Heart left ventricle (tissue), 16 donors: ENCODE measurements at regions of chrX and their contacts with region 1.

Region 1: GRCh38 chrX:49073601-49074571 is at the start of gene PRAF2:
- DNase-seq: peak; percentile 92 to 95 (median 94)
- ATAC-seq: peak; percentile 90 to 96 (median 92)
- H3K4me3 ChIP-seq: peak within 1 kb of the TSS; percentile 14 to 90 (median 63)
- H3K27ac ChIP-seq: peak within 1 kb of the TSS in 11 of 12 donors; percentile 69 to 92 (median 79)
- H3K4me1 ChIP-seq: peaks cover 0 to 20% (median 6%) of the 10 kb centered on the region in 12 donors
- H3K27me3 ChIP-seq: no peaks in the 10 kb centered on the region
- CTCF ChIP-seq: peak in 4 of 12 donors; percentile 3 to 14 (median 10)
- POLR2A ChIP-seq: peak in 1 of 2 donors; percentile 71
- total RNA-seq, gene PRAF2: 8.0 to 24.0 (median 10.9) TPM

Region 2: DNA sequence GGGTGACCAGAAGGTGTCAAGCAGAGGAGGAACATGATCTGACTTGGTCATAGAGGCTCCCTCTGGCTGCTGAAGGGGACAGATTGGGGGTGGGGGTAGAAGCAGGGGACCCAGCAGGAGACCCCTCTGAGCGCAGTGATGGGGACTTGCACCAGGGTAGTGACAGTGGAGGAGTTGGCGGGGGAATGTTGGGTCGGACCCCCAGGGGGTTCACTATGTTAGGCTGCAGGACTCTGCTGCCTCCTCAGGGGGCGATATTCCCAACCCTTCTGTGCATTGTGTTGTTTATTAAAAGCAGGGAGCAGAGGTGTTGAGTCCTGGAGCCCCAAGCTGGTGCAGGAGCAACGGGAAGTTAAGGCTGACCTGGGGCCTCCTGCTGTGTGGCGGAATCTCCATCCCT is 467.8 kb before region 1 on chrX:
- intact Hi-C with region 1: loop called in 1 of 10 experiments (anchors 10 kb)
- DNase-seq: no peak
- ATAC-seq: peak in 1 of 4 donors; percentile 10
- H3K4me3 ChIP-seq: no peak overlapping the region
- H3K27ac ChIP-seq: no peak overlapping the region
- H3K4me1 ChIP-seq: no peaks in the 10 kb centered on the region
- H3K27me3 ChIP-seq: no peaks in the 10 kb centered on the region
- CTCF ChIP-seq: peak in 1 of 12 donors; percentile 5
- POLR2A ChIP-seq: no peak